Posterior cingulate gyrus (tissue), 11 donors: ENCODE measurements at regions of chr7 and their contacts with region 1.

Region 1: GRCh38 chr7:95916573-95917297 is 144.4 kb downstream of the DYNC1I1 start:
- DNase-seq: peak; percentile 74 to 97 (median 90)

Region 2: GRCh38 chr7:96075510-96076349 is 159.0 kb after region 1 on chr7:
- intact Hi-C with region 1: loop called (anchors 10 kb)
- DNase-seq: peak; percentile 46 to 95 (median 70)

Region 3: DNA sequence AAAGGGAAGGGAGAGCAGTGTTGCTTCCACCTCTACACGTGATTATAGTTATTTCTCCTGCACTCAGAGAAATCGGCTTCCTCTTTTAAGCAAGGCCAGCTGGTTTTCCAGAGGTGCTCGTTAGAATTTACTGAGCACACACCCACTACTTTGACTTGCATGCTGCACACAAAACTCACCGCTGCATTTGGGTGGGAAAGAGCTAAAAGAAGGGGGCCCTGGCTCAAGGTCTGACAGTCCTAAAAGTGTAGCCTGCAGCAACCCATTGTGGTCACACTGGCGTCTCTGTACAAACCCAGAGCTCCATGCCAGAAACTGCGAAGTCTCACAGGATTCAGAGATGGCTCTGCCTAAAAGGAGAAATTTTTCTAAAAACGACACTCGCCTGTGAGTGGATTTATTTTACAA is 271.4 kb after region 1 on chr7:
- intact Hi-C with region 1: no loop called
- DNase-seq: peak in 1 of 10 donors; percentile 19

Region 4: GRCh38 chr7:96414931-96415292 is 498.2 kb after region 1 on chr7:
- intact Hi-C with region 1: loop called (anchors 5 kb)
- DNase-seq: peak in 6 of 10 donors; percentile 13 to 84 (median 40)

Region 5: GRCh38 chr7:97027427-97028234 is 1110.9 kb after region 1 on chr7:
- intact Hi-C with region 1: loop called (anchors 1 kb)
- DNase-seq: peak; percentile 64 to 97 (median 82)

Region 6: DNA sequence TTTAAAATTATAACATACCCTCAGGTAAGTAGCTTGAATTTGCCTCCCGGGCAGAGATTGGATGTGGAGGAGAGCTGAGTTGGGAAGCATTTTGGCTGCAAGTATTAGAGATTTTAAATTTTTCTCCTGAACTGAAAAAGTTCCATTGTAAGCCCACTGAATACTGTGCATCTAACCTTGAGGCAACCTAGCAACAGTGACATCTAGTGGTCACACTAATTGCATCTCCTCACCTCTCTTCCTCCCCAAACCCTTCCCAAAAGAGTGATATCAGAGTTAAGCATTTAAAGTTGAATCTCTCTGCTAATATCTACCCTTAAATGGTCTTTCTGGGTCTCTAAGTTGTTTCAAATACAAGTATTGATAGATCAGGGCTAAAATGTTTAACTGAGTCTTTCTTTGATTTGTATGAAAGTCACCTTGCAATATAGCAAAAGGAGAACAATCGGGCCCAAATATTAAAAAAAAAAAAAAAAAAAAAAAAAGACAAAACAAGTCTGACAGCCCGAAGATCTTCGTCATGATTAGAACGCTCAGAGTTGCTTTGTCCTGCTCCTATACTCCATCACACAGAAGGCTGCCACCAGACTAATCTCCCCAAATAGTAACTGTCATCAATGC is 1148.3 kb after region 1 on chr7:
- intact Hi-C with region 1: loop called (anchors 1 kb)
- DNase-seq: no peak